ENCODE measurements at regions of chr11 and their contacts with region 1.

Region 1: GRCh38 chr11:44286268-44286880 is 23.6 kb downstream of the ALX4 start:
- DNase-seq: peak; percentile 55 to 56
- ATAC-seq: peak; percentile 65 to 88 (median 74)
- H3K4me3 ChIP-seq: no peak overlapping the region
- H3K27ac ChIP-seq: no peak overlapping the region
- H3K4me1 ChIP-seq: peaks cover 0 to 3% (median 0%) of the 10 kb centered on the region in 9 donors
- H3K27me3 ChIP-seq: peaks cover 0 to 10% (median 0%) of the 10 kb centered on the region in 7 donors
- CTCF ChIP-seq: peak; percentile 91 to 98 (median 96)

Region 2: DNA sequence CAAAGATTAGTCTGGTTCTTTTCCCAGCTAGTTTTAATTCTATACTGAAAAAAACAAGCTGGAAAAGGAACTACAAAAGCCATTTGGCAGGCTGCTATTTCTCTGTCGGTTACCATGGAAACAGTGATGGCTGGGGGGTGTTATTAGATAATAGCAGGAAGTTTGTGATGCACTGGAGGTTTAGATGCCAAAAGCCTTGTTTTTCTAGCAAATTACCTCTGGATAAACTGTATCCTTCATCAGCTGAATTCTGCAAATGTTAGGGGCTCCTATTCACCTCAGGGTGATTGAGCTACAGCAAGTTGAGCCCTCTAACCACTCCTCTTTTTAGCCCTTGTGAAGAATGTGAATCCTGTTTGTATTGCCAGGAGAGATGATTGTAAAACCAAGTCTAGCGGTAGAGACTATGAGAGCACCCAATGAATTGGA is 380.5 kb before region 1 on chr11:
- intact Hi-C with region 1: no loop called
- DNase-seq: peak in 1 of 2 donors; percentile 76
- ATAC-seq: peak in 7 of 8 donors; percentile 16 to 85 (median 70)
- H3K4me3 ChIP-seq: peak overlapping the region in 1 of 10 donors; percentile 6
- H3K27ac ChIP-seq: peak overlapping the region in 8 of 10 donors; percentile 46 to 76 (median 70)
- H3K4me1 ChIP-seq: peaks cover 3 to 46% (median 22%) of the 10 kb centered on the region in 9 donors
- H3K27me3 ChIP-seq: no peaks in the 10 kb centered on the region
- CTCF ChIP-seq: no peak

Region 3: DNA sequence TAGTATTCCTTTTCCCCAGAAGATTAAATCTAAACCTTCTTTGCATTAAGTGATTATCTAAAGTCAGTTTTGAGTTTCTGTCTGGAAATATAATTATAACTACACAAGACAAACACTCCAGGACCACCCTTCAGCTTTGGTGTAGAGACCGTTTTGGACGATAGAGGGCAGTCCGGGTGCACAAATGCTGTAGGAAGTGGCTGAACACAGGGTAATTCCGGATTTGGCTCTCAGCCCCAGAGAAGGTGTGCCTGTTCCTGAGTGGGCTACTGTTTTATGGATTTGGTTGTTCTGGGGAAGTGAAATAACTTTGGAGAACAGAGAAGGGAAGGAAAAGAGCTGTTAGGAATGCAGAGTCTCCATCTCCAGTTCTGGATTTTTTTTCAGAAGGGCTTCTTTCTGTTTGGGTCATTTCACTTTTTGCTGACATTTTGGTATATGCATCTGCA is 176.1 kb before region 1 on chr11:
- intact Hi-C with region 1: loop called in 2 of 10 experiments (anchors 5 to 10 kb)
- DNase-seq: peak; percentile 33 to 82
- ATAC-seq: peak; percentile 69 to 89 (median 84)
- H3K4me3 ChIP-seq: no peak overlapping the region
- H3K27ac ChIP-seq: peak overlapping the region in 3 of 10 donors; percentile 8 to 38 (median 18)
- H3K4me1 ChIP-seq: peaks cover 9 to 46% (median 29%) of the 10 kb centered on the region in 9 donors
- H3K27me3 ChIP-seq: no peaks in the 10 kb centered on the region
- CTCF ChIP-seq: peak; percentile 59 to 88 (median 79)

Region 4: GRCh38 chr11:44133335-44133946 is 152.9 kb before region 1 on chr11:
- intact Hi-C with region 1: loop called in 4 of 10 experiments (anchors 10 kb)
- DNase-seq: no peak
- ATAC-seq: peak in 7 of 8 donors; percentile 16 to 68 (median 48)
- H3K4me3 ChIP-seq: no peak overlapping the region
- H3K27ac ChIP-seq: no peak overlapping the region
- H3K4me1 ChIP-seq: peaks cover 0 to 9% (median 0%) of the 10 kb centered on the region in 9 donors
- H3K27me3 ChIP-seq: no peaks in the 10 kb centered on the region
- CTCF ChIP-seq: peak; percentile 34 to 80 (median 63)

Region 5: DNA sequence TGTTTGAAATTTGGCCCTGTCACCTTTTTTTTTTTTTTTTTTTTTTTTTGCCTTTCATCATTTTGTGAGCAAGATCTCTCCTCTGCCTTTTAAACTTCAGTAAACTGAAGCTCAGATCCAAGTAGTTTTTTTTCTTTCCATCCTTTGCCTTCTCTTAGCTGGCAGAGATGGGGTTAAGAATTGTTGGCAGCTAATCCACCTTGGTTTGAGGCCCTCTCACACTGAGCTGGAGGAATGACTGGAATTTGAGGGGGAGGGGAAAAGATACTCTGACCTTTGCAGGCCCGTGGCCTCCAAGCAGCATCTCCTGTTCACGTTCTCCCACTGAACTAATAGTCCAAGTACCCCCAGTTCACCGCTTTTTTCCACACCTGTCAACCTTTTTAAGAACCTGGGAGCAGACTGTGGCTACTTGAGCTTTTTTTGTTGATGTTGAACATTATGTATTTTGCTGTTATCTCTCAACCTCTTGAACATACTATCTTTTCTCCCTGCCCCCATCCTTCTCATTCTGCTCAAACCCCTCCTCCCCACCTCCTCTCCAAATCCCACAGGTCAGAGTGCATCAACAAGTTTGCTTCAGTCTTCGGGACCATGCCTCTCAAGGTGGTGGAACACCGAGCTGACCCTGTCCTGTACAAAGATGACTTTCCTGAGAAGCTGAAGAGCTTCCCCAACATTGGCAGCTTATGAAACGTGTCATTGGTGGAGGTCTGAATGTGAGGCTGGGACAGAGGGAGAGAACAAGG is 42.6 kb before region 1 on chr11:
- intact Hi-C with region 1: no loop called
- DNase-seq: no peak
- ATAC-seq: peak in 5 of 8 donors; percentile 50 to 54 (median 51)
- H3K4me3 ChIP-seq: no peak overlapping the region
- H3K27ac ChIP-seq: peak overlapping the region in 1 of 10 donors; percentile 23
- H3K4me1 ChIP-seq: peaks cover 16 to 72% (median 50%) of the 10 kb centered on the region in 9 donors
- H3K27me3 ChIP-seq: no peaks in the 10 kb centered on the region
- CTCF ChIP-seq: no peak

Region 6: DNA sequence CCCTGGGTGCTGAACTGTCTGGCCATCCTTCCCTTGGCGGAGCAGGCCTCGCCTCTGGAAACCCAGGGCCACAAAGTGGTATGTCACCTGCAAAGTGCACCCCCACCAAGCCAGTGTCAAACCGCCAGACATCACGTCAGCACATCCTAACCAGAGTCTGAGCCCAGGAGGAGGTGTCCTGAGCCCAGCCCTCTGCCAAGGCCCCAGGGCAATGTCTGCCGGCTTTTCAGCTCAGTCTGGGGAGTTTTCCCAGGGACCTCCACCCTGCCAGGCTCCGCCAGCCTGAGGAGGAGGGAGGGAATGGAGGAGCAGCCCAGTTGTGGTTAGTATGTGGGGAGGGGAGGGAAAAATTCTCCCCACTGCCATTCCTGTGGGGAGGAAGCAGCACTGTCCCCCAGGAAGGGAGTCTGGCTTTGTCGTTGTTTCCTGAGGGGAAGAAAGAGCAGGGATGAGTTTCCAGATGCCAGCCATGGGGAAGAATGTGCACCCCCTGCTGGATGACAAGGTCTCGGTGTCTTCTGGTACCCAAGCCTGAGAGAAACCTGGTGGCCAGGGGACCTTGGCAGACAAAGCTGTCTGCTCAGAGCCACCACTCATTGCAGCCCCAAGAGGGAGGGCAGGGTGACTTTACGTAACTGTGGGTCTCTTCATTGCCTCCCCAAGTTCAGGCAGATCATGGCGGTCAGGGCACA is 197.7 kb after region 1 on chr11:
- intact Hi-C with region 1: loop called in 1 of 10 experiments (anchors 5 kb)
- DNase-seq: peak in 1 of 2 donors; percentile 11
- ATAC-seq: peak in 4 of 8 donors; percentile 35 to 58 (median 46)
- H3K4me3 ChIP-seq: no peak overlapping the region
- H3K27ac ChIP-seq: no peak overlapping the region
- H3K4me1 ChIP-seq: no peaks in the 10 kb centered on the region
- H3K27me3 ChIP-seq: no peaks in the 10 kb centered on the region
- CTCF ChIP-seq: peak in 8 of 9 donors; percentile 20 to 54 (median 48)

Region 7: DNA sequence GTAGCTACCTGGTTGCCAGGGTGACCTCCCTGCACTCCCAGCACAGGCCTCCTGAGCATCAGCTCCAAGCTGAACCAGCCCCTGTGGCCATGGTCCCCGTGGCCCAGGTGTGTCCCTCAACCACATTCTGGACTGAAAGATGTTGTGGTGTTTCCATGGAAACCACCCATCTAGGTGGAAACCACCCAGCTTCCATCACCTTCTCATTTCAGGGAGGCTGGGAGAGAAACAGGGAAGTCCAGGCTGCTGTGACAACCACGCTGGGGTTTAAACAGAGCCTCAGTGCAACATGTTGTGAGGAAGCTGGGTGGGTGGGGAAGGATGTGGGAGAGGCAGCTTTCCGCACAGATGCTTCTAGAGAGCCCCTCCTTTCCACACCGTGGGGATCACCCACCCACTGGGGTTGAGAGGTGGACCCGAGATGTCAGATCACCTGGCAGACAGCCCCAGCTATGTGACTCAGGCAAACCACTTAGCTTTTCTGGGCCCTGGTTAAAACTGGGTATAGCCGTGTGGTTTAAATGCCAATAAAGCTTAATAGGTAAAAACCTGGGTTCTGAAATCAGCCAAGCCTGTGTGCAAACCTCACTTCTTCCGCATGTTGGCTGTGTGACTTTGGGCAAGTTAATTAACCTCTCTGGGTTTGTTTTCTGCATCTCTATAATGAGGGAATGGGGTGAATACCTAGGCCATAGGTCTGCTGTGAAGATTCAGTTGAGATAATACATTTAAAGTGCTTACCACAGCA is 325.5 kb after region 1 on chr11:
- intact Hi-C with region 1: loop called in 2 of 10 experiments (anchors 5 kb)
- DNase-seq: peak in 1 of 2 donors; percentile 41
- ATAC-seq: peak in 7 of 8 donors; percentile 12 to 78 (median 39)
- H3K4me3 ChIP-seq: no peak overlapping the region
- H3K27ac ChIP-seq: peak overlapping the region in 9 of 10 donors; percentile 8 to 57 (median 43)
- H3K4me1 ChIP-seq: peaks cover 9 to 76% (median 58%) of the 10 kb centered on the region in 9 donors
- H3K27me3 ChIP-seq: no peaks in the 10 kb centered on the region
- CTCF ChIP-seq: no peak

Region 8: DNA sequence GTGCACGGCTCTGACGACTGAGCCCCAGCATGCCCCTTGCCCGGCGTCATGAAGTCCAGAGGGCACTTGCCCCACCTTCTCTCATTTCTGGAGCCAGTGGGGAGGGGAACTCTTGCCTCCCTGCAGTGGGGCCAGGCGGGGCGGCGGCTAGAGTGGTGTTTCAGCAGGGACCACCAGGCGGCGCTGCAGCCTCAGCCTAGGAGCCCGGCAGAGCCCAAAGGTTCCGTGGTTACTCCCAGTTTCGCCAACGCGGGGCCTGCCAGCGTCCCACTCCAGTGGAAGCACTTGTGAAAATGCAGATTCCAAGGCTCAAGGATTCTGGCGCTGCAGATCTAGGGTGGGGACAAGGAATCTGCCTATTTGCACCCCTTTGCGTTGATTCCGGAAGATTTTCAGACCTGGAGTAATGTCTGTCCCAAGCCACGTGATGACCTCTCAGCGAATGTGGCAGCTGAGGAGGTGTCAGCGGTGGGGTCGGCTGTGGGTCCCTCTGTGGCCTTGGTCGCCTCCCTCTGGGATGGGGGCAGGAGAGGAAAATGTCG is 334.8 kb after region 1 on chr11:
- intact Hi-C with region 1: loop called in 1 of 10 experiments (anchors 5 kb)
- DNase-seq: peak; percentile 76 to 83
- ATAC-seq: peak; percentile 62 to 82 (median 70)
- H3K4me3 ChIP-seq: peak overlapping the region in 6 of 10 donors; percentile 10 to 39 (median 33)
- H3K27ac ChIP-seq: no peak overlapping the region
- H3K4me1 ChIP-seq: peaks cover 12 to 54% (median 37%) of the 10 kb centered on the region in 9 donors
- H3K27me3 ChIP-seq: no peaks in the 10 kb centered on the region
- CTCF ChIP-seq: peak; percentile 97 to 99 (median 98)